ENCODE measurements at regions of chr2 and their contacts with region 1.

Region 1: DNA sequence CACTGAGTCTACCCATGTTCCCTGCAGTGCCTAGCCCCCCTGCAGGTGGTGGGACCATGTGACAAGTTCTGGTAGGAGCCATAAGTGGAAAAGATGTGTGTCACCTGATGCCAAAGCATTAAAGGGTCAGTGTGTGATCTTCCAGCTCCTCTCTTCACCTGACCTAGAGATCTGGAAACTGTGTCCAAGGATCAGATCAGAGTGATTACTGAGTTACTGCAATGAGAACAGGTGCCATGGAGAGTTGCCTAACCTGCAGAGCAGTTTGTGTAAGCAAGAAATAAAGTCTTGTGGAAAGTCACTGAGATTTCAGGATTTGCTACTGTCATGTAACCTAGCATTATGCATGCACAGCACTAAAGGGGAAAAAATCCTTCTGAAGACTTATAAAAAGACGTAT is 90.6 kb downstream of the ACVR1C start:
- DNase-seq: no peak

Region 2: GRCh38 chr2:157318884-157319283 is 219.2 kb before region 1 on chr2:
- intact Hi-C with region 1: loop called in 1 of 2 experiments (anchors 5 kb)
- DNase-seq: no peak

Region 3: GRCh38 chr2:157856187-157856515 is 318.1 kb after region 1 on chr2:
- intact Hi-C with region 1: no loop called
- DNase-seq: no peak

Measured in posterior vena cava (tissue), 2 donors.